Endothelial cell of umbilical vein (primary cell): ENCODE measurements at regions of chr3 and their contacts with region 1.

Region 1: DNA sequence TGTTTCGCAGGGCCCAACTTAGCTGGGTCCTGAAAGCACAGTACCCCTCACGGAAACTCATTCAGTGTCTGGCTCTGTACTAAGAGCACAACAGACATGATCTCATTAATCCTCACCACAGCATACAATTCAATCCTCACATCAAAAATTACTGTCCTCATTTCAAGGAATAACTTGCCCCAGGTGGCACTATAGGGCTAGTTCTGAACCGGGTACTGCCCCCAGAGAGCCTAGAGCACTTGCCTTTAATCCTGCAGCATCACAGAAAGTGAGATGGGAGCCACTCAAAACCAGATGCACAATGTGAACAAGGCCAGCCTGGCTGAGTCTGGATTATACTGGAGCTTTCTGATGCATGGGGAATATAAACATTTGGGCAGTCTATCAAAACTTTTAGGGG is 122.6 kb downstream of the OSBPL10 start:
- DNase-seq: peak; percentile 11
- H3K4me3 ChIP-seq: no peak overlapping the region
- H3K27ac ChIP-seq: no peak overlapping the region
- H3K4me1 ChIP-seq: no peaks in the 10 kb centered on the region
- H3K27me3 ChIP-seq: no peaks in the 10 kb centered on the region
- CTCF ChIP-seq: no peak
- POLR2A ChIP-seq: no peak

Region 2: DNA sequence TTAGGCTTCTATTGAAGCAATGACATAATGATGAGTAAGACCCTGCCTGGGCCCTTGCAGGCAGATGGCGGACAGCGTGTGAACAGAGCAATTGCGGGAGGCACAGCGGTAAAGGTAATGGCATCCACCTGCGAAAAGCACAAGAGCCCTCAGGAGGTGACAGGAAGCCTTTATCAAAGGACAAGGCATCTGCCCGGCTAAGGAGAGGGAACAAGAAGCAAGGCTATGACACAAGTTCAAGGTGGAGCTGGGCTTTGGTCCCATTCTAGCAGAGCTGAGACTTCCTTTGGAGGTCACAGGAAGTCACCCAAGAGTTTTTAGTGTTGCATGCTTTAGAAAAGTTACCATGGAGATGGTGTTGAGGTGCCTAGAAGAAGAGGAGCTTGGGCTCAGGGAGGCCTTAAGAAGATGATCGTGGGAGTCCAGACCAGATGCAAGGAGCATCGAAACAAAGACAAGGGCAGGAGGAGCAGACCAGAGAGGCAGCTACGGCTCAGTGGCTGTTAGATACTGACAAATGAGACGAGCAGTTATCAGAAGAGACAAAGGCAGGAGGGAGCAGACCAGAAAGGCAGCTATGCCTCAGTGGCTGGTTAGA is 88.1 kb after region 1 on chr3:
- CTCF ChIA-PET with region 1: no interaction called
- POLR2A ChIA-PET with region 1: no interaction called
- dilution Hi-C with region 1: no loop called
- intact Hi-C with region 1: no loop called
- DNase-seq: no peak
- H3K4me3 ChIP-seq: no peak overlapping the region
- H3K27ac ChIP-seq: no peak overlapping the region
- H3K4me1 ChIP-seq: peaks cover under 1% of the 10 kb centered on the region
- H3K27me3 ChIP-seq: no peaks in the 10 kb centered on the region
- CTCF ChIP-seq: no peak
- POLR2A ChIP-seq: no peak

Region 3: DNA sequence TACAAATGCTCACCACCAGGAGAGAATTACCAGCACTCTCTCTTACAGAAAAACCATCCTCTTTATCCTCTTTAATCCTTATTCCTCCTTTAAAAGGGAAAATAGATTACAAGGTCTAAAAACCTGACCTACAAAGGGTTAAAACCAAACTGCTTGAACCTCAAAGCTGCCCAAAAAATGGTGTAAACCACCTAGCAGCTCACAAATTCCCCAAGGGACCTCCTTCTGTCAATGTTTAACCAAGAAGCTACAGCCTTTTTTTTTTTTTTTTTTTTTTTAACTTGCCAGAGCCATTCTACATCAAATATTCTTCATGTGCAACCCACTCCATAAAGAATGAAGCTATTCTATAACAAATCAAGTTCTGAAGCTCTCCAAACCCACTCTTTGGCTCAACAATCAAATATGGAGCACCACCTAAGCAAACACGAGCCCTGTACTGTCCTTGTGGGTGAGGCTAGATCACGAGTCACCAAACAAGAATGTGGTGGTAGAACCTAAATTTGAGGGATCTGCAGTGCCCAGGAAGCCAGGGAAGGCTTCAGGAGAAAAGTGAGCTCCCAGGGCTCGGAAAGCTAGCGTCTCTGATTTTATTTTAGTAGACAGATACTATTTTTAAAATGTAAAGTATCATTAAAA is 102.5 kb after region 1 on chr3:
- CTCF ChIA-PET with region 1: no interaction called
- POLR2A ChIA-PET with region 1: no interaction called
- dilution Hi-C with region 1: no loop called
- intact Hi-C with region 1: loop called (anchors 5 kb)
- DNase-seq: no peak
- H3K4me3 ChIP-seq: no peak overlapping the region
- H3K27ac ChIP-seq: no peak overlapping the region
- H3K4me1 ChIP-seq: peaks cover 24% of the 10 kb centered on the region
- H3K27me3 ChIP-seq: no peaks in the 10 kb centered on the region
- CTCF ChIP-seq: no peak
- POLR2A ChIP-seq: no peak

Region 4: GRCh38 chr3:32406486-32407408 is 548.3 kb after region 1 on chr3:
- CTCF ChIA-PET with region 1: no interaction called
- POLR2A ChIA-PET with region 1: no interaction called
- dilution Hi-C with region 1: no loop called
- intact Hi-C with region 1: no loop called
- DNase-seq: no peak
- H3K4me3 ChIP-seq: no peak overlapping the region
- H3K27ac ChIP-seq: no peak overlapping the region
- H3K4me1 ChIP-seq: peaks cover 19% of the 10 kb centered on the region
- H3K27me3 ChIP-seq: no peaks in the 10 kb centered on the region
- CTCF ChIP-seq: no peak
- POLR2A ChIP-seq: no peak